Endothelial cell of umbilical vein (primary cell): ENCODE measurements at regions of chr6 and their contacts with region 1.

Region 1: DNA sequence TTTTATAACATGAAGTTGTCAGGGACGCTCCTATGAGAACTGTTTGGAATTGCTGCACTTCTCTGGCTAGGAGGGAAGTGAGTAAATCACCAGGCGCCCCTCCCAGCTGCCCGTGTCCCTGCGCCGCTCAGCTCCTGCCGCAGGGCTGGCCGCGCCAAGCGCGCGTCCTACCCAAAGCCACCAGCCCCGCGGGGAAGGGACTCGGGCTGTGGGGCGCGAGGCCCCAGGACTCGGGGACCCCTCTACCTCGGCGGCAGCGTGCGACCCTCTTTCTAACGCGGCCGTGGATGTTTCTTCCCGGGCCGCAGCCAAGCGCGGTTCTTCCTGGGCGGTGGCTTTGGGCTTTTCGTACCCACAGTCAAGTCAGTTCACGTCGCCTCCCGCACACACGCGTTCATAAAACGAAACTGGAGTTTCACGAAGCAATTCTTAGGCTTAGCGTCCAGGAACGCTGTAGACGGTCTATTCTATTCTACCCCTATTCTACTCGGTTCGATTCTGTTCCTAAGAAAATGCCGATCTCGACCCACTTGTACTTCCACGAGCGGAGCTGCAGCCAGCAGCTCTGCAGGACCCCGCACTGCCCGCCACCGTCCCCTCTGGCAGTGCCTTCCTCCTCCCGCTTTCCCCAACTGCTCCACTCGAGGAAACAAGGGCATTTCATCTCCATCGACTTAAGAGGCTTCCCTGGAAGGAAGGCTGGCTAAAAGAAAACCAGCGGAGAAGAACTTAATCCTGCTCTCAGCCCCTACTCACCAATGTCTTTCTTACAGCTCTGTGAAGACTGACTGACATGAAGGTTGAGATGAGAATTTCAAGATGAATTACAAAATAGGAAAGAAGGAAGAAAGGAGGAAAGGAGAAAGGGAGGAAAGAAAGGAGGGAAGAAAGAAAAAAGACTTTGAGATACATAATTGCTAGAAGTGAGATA is 15.4 kb downstream of the FOXC1 start:
- DNase-seq: peak; percentile 73
- H3K4me3 ChIP-seq: peak overlapping the region; percentile 59 to 86 (median 69)
- H3K27ac ChIP-seq: peak overlapping the region; percentile 3
- H3K4me1 ChIP-seq: peaks cover 21% of the 10 kb centered on the region
- H3K27me3 ChIP-seq: peaks cover 5 to 15% of the 10 kb centered on the region in 2 experiments
- CTCF ChIP-seq: no peak
- POLR2A ChIP-seq: no peak

Region 2: GRCh38 chr6:1635305-1636010 is 10.3 kb after region 1 on chr6:
- CTCF ChIA-PET with region 1: interaction called, 4 read pairs
- POLR2A ChIA-PET with region 1: no interaction called
- dilution Hi-C with region 1: no loop called
- intact Hi-C with region 1: loop called (anchors 1 kb)
- DNase-seq: peak; percentile 87
- H3K4me3 ChIP-seq: no peak overlapping the region
- H3K27ac ChIP-seq: no peak overlapping the region
- H3K4me1 ChIP-seq: peaks cover 3% of the 10 kb centered on the region
- H3K27me3 ChIP-seq: no peaks in the 10 kb centered on the region
- CTCF ChIP-seq: peak in 1 of 2 donors; percentile 13
- POLR2A ChIP-seq: no peak

Region 3: GRCh38 chr6:1917626-1918371 is 292.7 kb after region 1 on chr6:
- CTCF ChIA-PET with region 1: no interaction called
- POLR2A ChIA-PET with region 1: no interaction called
- dilution Hi-C with region 1: no loop called
- intact Hi-C with region 1: loop called (anchors 2 kb)
- DNase-seq: peak; percentile 86
- H3K4me3 ChIP-seq: no peak overlapping the region
- H3K27ac ChIP-seq: peak overlapping the region; percentile 75
- H3K4me1 ChIP-seq: peaks cover 18% of the 10 kb centered on the region
- H3K27me3 ChIP-seq: no peaks in the 10 kb centered on the region
- CTCF ChIP-seq: no peak
- POLR2A ChIP-seq: no peak